Calu3 (cell line): ENCODE measurements at regions of chr6 and their contacts with region 1.

Region 1: GRCh38 chr6:138817822-138818308 is 22.0 kb downstream of the ECT2L start:
- DNase-seq: peak; percentile 90
- H3K4me3 Mint-ChIP-seq: peak overlapping the region; percentile 17
- H3K27ac Mint-ChIP-seq: peak overlapping the region; percentile 94
- H3K4me1 Mint-ChIP-seq: peaks cover 28% of the 10 kb centered on the region
- H3K27me3 Mint-ChIP-seq: no peaks in the 10 kb centered on the region
- CTCF ChIP-seq: no peak

Region 2: GRCh38 chr6:138909511-138909910 is 91.6 kb after region 1 on chr6:
- CTCF ChIA-PET with region 1: no interaction called
- intact Hi-C with region 1: loop called (anchors 10 kb)
- DNase-seq: no peak
- H3K4me3 Mint-ChIP-seq: no peak overlapping the region
- H3K27ac Mint-ChIP-seq: no peak overlapping the region
- H3K4me1 Mint-ChIP-seq: no peaks in the 10 kb centered on the region
- H3K27me3 Mint-ChIP-seq: no peaks in the 10 kb centered on the region
- CTCF ChIP-seq: no peak

Region 3: GRCh38 chr6:138987640-138988468 is 170.0 kb after region 1 on chr6 and contains the start of gene REPS1:
- CTCF ChIA-PET with region 1: interaction called, 5 read pairs
- intact Hi-C with region 1: loop called (anchors 1 kb)
- DNase-seq: peak; percentile 89
- H3K4me3 Mint-ChIP-seq: peak within 1 kb of the TSS; percentile 79
- H3K27ac Mint-ChIP-seq: peak within 1 kb of the TSS; percentile 60
- H3K4me1 Mint-ChIP-seq: no peaks in the 10 kb centered on the region
- H3K27me3 Mint-ChIP-seq: no peaks in the 10 kb centered on the region
- CTCF ChIP-seq: peak; percentile 84
- total RNA-seq, gene REPS1: 24.1 and 29.5 TPM in 2 replicates